Breast epithelium (tissue), 4 donors: ENCODE measurements at regions of chr13 and their contacts with region 1.

Region 1: DNA sequence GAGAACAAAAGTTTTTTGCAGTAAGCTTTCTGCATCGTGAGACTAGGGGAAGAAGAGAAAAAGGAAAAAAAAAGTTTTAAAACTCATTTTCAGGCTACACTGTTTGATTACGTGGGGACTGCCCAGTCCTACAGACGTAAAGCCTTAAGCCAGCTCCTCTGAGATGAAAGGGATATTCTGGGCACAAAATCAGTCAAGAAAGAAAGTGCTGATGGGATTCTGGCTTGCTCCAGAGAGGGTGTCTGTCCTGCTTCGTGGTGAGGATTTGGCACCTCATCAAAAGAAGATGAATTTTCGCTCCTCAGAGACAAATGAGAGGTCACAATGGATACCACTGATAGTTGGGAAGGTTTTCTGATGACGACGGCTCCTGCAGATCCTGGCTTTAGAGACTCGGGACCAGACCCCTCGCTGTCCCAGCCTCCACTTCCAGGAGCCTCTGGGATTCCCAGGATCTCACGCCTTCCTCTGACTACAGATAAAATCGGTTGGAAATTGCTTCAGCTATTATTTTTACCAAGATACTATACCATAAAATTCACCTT is 9.7 kb downstream of the TEX29 start:
- DNase-seq: no peak
- H3K4me3 ChIP-seq: no peak overlapping the region
- H3K27ac ChIP-seq: no peak overlapping the region
- H3K4me1 ChIP-seq: no peaks in the 10 kb centered on the region
- H3K27me3 ChIP-seq: no peaks in the 10 kb centered on the region
- CTCF ChIP-seq: no peak
- POLR2A ChIP-seq: no peak

Region 2: DNA sequence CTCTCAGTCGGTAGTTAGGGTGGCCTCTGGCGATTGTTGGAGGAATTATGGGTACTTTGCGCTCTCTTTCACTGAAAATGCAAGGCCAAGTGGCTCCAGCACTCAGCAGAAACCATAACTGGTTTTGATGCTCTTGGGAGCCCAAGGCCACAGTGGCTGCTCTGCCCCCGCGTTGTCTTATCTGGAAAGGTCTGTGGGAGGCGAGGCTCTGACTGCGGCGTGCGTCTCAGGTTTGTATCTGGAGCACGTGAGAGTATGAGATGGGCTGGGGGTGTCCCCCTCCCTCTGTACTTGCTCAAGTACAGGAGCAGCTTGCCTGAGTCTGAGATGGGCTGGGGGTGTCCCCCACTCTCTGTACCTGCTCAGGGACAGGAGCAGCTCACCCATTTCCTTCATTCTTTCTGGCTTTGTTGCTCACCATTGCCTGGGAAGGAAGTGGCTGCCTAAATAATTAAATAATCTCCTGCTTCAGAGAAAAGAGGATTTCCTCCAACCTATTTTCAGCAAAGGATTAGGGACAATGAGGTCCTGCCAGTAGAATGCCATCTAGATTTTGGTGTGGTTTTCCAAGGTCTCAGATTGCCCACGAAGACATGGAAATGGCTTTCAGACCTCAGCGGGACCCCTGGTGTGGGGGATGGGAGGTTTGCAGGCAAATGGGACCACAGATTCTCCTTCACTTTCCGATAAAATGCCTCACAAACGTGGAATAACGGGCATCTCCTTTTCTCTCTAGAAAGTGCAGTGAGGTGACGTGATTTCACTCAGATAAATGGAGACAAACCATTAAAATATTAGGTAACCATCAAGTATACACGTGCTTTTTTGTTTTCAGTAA is 1374.4 kb after region 1 on chr13:
- intact Hi-C with region 1: loop called (anchors 5 kb)
- DNase-seq: no peak
- H3K4me3 ChIP-seq: no peak overlapping the region
- H3K27ac ChIP-seq: peak overlapping the region in 1 of 2 donors; percentile 43
- H3K4me1 ChIP-seq: no peaks in the 10 kb centered on the region
- H3K27me3 ChIP-seq: no peaks in the 10 kb centered on the region
- CTCF ChIP-seq: no peak
- POLR2A ChIP-seq: no peak